Right ventricle myocardium inferior (tissue), 1 donor: ENCODE measurements at regions of chr3 and their contacts with region 1.

Region 1: DNA sequence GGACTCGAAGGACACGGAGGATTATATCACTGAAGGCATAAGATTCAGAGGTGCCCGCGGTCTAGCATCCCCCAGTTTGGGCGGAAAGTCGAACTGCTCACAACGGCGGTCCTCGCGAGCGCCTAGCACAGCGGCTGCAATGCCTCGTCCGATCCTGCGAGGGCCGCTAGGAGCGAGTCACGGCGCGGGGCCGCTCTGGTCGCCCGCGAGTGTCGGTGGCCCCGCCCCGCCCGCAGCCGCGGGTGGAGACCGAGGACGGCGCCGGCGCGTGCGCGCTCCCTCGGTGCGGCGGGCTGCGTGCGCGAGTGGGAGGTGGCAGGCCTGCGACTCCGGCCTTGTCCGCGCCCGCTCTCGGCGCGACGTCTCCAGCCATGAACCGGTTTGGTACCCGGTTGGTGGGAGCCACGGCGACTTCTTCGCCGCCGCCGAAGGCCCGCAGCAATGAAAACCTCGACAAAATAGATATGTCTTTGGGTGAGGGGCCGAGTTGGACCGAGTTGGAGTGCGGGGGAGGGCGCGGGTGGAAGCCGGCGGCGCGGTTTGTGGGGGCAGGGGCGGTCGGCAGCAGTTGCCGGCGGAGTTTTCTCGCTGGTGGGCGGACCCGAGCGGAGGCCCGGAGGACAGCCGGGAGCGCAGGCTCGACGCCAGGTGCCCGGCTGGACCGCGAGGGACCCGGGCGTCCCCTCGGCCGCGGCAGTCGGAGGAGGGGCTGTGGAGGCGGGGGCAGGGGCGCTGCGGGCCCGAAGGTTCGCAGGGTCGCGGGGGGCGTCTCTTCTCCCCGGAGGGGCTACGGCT is at the start of gene FYTTD1:
- DNase-seq: peak; percentile 97
- ATAC-seq: peak; percentile 97
- total RNA-seq, gene FYTTD1: 65.2 TPM

Region 2: GRCh38 chr3:197711973-197712707 is 37.7 kb before region 1 on chr3:
- intact Hi-C with region 1: loop called (anchors 2 kb)
- DNase-seq: peak; percentile 89
- ATAC-seq: peak; percentile 95

Region 3: DNA sequence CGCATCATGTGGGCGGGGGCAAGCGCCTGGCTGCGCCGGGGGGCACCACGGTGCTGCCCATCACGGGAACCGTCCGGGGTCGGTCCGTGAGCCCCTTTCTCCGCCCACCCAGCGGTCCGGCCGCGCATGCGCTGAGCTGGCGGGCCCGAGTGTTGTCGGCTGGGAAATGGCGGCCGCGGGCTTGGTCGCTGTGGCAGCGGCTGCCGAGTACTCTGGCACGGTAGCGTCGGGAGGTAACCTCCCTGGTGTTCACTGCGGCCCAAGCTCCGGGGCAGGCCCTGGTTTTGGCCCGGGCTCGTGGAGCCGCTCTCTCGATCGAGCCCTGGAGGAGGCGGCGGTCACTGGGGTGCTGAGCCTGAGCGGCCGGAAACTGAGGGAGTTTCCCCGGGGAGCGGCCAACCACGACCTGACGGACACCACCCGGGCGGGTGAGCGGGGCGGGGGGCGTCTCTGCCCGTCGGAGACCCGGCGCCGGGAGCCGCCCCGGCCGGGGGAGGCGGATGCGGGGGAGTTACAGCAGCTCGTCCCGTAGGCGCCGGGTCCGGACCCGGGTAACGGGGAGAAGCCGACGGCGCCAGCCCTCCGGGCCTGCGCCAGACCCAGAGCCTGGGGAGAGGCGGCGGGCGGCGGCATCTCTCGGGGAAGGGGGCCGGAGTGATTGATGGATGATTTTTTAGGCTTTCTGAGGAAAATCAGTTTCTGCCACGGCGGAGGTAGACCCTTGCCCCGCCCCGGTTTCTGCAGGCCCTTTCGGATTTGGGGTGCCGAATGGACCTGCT is 41.5 kb after region 1 on chr3 and contains the start of gene LRCH3:
- intact Hi-C with region 1: loop called (anchors 5 kb)
- DNase-seq: peak; percentile 91
- ATAC-seq: peak; percentile 90
- total RNA-seq, gene LRCH3: 17.9 TPM